BJ (cell line): ENCODE measurements at regions of chr11 and their contacts with region 1.

Region 1: GRCh38 chr11:64152841-64153691 is 12.8 kb downstream of the MACROD1 start:
- DNase-seq: no peak
- H3K4me3 ChIP-seq: no peak overlapping the region
- H3K27me3 ChIP-seq: no peaks in the 10 kb centered on the region
- CTCF ChIP-seq: peak; percentile 96

Region 2: DNA sequence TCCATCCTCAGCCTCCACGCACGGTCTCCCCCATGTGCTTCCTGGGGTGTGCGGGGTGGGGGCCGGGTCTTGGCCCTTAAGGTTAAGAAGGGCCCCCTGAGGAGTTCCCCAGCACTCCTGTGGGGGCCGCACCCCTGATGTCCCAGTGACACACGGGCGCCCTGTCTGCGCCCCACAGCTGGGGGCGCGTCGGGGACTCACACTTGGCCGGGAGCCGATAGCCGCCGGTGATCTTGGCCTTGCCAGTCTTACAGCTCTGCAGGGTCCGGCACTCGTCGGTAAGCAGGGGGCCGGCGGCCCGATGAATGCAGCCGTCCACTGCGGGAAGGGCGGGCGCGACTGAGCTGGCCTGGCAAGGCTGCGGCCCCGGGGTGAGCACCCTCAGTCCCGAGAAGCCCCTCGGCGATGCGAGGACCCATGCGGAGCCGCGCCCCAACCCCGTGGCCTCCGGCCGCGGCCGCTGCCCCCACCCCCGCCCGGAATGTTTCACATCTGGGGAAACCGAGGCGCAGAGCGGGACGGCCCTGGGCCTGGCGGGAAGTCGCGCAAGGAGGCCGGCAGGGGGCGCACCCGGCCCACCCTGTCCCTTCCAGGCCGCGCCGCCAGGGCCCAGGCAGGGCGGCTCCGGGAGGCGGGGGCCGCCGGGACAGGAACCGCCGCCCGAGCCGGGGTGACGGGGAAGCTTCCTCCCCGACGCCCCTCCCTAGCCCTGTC is 152.9 kb before region 1 on chr11:
- CTCF ChIA-PET with region 1: interaction called, 239 read pairs
- POLR2A ChIA-PET with region 1: no interaction called
- DNase-seq: no peak
- H3K4me3 ChIP-seq: peak overlapping the region; percentile 28
- H3K27me3 ChIP-seq: no peaks in the 10 kb centered on the region
- CTCF ChIP-seq: peak; percentile 48

Region 3: GRCh38 chr11:64007629-64008282 is 145.3 kb before region 1 on chr11:
- CTCF ChIA-PET with region 1: interaction called, 239 read pairs
- POLR2A ChIA-PET with region 1: no interaction called
- DNase-seq: no peak
- H3K4me3 ChIP-seq: peak overlapping the region; percentile 31
- H3K27me3 ChIP-seq: no peaks in the 10 kb centered on the region
- CTCF ChIP-seq: no peak; the same call in 1 of the 2 replicates

Region 4: DNA sequence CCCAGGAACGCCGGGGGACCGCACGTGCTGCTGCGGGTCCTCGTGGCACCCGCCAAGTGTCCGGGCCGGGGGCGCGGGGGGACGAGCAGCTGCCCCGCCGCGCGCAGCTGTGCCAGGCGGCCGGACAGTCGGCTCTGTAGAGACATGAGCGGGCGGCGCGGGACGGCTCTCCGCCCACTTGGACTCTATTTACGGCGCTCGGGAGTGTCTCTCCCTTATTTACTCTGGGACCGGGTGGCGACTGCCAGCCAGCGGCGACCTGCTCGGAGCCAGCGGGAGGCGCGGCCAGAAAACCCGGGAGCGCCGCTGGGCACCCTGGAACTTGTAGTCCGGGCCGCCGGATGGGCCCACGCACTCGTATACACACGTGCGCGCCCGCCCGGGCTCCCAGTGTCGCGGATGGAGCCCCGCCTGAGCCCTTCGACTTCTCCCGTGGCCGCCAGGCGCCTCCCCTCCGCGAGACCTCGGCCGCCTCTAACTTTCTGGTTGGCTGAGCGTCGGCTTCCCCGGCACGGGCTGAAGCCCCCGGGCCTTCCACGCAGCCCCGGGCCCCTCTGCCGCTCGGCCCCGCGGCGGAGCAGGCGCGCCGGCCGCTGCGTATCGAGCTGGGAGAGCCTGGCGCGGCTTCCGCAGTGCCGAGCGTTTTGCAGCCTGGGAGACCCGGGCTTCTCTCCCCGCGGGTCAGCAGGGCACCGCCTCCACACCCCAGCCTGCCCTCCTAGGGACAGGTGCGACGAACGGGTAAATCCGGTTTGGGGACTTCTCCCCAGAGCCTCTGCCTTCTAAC is 13.0 kb after region 1 on chr11 and contains the start of gene MACROD1:
- CTCF ChIA-PET with region 1: interaction called, 39 read pairs
- POLR2A ChIA-PET with region 1: no interaction called
- DNase-seq: peak; percentile 18
- H3K4me3 ChIP-seq: peak within 1 kb of the TSS; percentile 49
- H3K27me3 ChIP-seq: no peaks in the 10 kb centered on the region
- CTCF ChIP-seq: no peak
- polyA plus RNA-seq, gene MACROD1: 11.7 and 12.4 TPM in 2 replicates